ENCODE measurements at regions of chr12 and their contacts with region 1.

Region 1: GRCh38 chr12:47228802-47229201 is 149.0 kb upstream of the AMIGO2 start:
- DNase-seq: no peak
- CTCF ChIP-seq: no peak

Region 2: GRCh38 chr12:47216150-47216677 is 12.6 kb before region 1 on chr12:
- CTCF ChIA-PET with region 1: interaction called, 10 read pairs
- POLR2A ChIA-PET with region 1: no interaction called
- DNase-seq: peak; percentile 44
- CTCF ChIP-seq: no peak